ENCODE measurements at regions of chr9 and their contacts with region 1.

Region 1: GRCh38 chr9:15104826-15105420 is 194.7 kb upstream of the FREM1 start:
- DNase-seq: peak; percentile 40 to 56
- H3K4me3 ChIP-seq: no peak overlapping the region
- H3K4me3 Mint-ChIP-seq: no peak overlapping the region
- H3K27ac Mint-ChIP-seq: no peak overlapping the region
- H3K4me1 ChIP-seq: 0 out of 2 replicates have a peak, but pooled peaks cover 5% of the 10 kb centered on the region
- H3K4me1 Mint-ChIP-seq: peaks cover 5% of the 10 kb centered on the region
- H3K27me3 ChIP-seq: no peaks in the 10 kb centered on the region
- H3K27me3 Mint-ChIP-seq: peaks cover 2% of the 10 kb centered on the region
- CTCF ChIP-seq: peak; percentile 54 to 67

Region 2: DNA sequence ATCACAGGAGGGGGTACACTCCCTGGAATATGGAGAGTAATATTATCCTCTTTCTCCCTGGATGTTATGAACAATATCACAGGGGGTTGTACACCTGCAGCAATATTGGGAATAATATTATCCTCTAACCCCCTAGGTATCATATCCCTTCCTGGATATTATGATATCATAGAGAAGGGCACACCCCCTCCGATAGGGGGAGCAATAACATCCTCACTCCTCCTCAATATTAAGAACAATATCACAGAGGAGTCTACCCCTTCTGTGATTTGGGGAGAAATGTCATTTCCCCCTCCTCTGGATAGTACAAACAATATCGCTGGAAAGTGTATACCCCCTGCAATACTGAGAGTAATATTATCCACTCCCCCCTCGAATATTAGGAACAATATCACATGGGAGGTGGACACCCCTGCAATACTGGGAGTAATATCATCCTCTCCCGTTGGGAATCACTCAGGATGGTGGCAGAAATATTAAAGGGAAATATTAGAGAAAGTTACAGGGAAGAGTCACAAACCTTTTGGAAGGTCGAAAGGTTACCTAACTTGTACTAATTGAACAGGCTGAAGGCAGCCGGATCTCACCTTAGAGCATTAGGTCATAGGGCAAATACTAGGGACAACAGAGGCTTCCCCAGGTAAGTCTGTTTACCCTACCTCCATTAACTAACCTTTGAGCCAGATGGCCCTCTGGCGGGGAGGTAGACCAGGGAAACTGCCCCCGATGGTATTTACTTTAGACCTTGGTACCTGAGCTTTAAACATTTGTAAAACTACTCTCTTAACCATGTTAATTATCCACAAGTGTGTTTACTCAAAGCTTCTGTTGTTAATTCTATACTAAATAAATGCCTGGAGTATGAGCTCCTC is 137.2 kb before region 1 on chr9:
- CTCF ChIA-PET with region 1: no interaction called
- POLR2A ChIA-PET with region 1: no interaction called
- intact Hi-C with region 1: no loop called
- DNase-seq: peak in 1 of 2 experiments; percentile 2
- H3K4me3 ChIP-seq: no peak overlapping the region
- H3K4me3 Mint-ChIP-seq: no peak overlapping the region
- H3K27ac Mint-ChIP-seq: no peak overlapping the region
- H3K4me1 ChIP-seq: no peaks in the 10 kb centered on the region
- H3K4me1 Mint-ChIP-seq: no peaks in the 10 kb centered on the region
- H3K27me3 ChIP-seq: no peaks in the 10 kb centered on the region
- H3K27me3 Mint-ChIP-seq: no peaks in the 10 kb centered on the region
- CTCF ChIP-seq: no peak

Region 3: GRCh38 chr9:15058236-15058635 is 46.7 kb before region 1 on chr9:
- CTCF ChIA-PET with region 1: no interaction called
- POLR2A ChIA-PET with region 1: no interaction called
- intact Hi-C with region 1: loop called (anchors 10 kb)
- DNase-seq: no peak
- H3K4me3 ChIP-seq: no peak overlapping the region
- H3K4me3 Mint-ChIP-seq: no peak overlapping the region
- H3K27ac Mint-ChIP-seq: no peak overlapping the region
- H3K4me1 ChIP-seq: no peaks in the 10 kb centered on the region
- H3K4me1 Mint-ChIP-seq: no peaks in the 10 kb centered on the region
- H3K27me3 ChIP-seq: no peaks in the 10 kb centered on the region
- H3K27me3 Mint-ChIP-seq: no peaks in the 10 kb centered on the region
- CTCF ChIP-seq: no peak

Region 4: DNA sequence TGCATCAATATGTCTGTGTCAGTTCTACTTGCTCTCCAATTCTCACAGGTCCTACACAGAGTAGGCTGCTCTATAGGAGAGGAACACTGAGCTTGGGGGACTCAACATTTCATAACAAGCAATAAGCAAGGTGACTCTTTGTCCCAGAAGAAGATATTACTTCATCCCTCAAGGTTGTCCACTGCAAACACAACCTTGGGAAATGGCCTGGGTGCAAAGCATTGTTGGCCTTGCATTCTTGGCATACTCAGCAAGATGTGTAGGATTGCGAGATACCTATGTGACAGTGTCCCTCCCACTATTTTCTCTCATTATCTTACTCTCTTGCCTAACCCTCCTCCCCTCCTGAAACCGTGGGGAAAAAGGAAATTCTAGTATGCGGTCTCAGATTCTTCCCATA is 24.9 kb before region 1 on chr9:
- CTCF ChIA-PET with region 1: no interaction called
- POLR2A ChIA-PET with region 1: no interaction called
- intact Hi-C with region 1: loop called (anchors 1 kb)
- DNase-seq: peak; percentile 46 to 53
- H3K4me3 ChIP-seq: no peak overlapping the region
- H3K4me3 Mint-ChIP-seq: peak overlapping the region; percentile 38
- H3K27ac Mint-ChIP-seq: no peak overlapping the region
- H3K4me1 ChIP-seq: no peaks in the 10 kb centered on the region
- H3K4me1 Mint-ChIP-seq: no peaks in the 10 kb centered on the region
- H3K27me3 ChIP-seq: no peaks in the 10 kb centered on the region
- H3K27me3 Mint-ChIP-seq: peaks cover 6% of the 10 kb centered on the region
- CTCF ChIP-seq: no peak

Region 5: GRCh38 chr9:15142878-15143534 is 38.1 kb after region 1 on chr9:
- CTCF ChIA-PET with region 1: no interaction called
- POLR2A ChIA-PET with region 1: no interaction called
- intact Hi-C with region 1: loop called (anchors 2 kb)
- DNase-seq: peak in 1 of 2 experiments; percentile 22
- H3K4me3 ChIP-seq: no peak overlapping the region
- H3K4me3 Mint-ChIP-seq: no peak overlapping the region
- H3K27ac Mint-ChIP-seq: no peak overlapping the region
- H3K4me1 ChIP-seq: no peaks in the 10 kb centered on the region
- H3K4me1 Mint-ChIP-seq: no peaks in the 10 kb centered on the region
- H3K27me3 ChIP-seq: no peaks in the 10 kb centered on the region
- H3K27me3 Mint-ChIP-seq: peaks cover 9% of the 10 kb centered on the region
- CTCF ChIP-seq: peak; percentile 47 to 60